Activated CD4-positive, alpha-beta T cell treated with anti-CD3 and anti-CD28 coated beads for 36 hours (primary cell): ENCODE measurements at regions of chr5 and their contacts with region 1.

Region 1: DNA sequence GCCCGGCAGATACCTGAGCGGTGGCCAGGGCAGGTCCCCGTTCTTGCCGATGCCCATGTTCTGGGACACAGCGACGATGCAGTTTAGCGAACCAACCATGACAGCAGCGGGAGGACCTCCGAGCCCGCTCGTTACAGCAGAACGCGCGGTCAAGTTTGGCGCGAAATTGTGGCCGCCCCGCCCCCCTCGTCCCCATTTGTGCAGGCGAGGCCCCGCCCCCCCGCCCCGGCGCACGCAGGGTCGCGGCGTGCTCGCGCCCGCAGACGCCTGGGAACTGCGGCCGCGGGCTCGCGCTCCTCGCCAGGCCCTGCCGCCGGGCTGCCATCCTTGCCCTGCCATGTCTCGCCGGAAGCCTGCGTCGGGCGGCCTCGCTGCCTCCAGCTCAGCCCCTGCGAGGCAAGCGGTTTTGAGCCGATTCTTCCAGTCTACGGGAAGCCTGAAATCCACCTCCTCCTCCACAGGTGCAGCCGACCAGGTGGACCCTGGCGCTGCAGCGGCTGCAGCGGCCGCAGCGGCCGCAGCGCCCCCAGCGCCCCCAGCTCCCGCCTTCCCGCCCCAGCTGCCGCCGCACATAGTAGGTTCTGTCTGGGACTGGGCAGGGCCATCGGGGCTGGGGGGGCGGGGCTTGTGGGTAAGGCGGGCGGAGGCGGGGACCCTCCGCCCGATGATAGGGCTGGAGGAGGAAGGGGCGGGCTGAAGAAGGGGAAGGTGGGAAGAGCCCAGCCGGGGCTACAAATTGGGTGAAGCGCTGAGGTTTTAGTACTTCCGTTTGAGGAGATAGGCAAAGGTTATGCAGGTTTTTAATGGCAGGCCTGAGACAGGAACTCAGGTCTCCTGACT is at the starts of genes DHFR and MSH3:
- DNase-seq: peak; percentile 95
- ATAC-seq: peak; percentile 69
- H3K4me3 Mint-ChIP-seq: peak within 1 kb of the TSS; percentile 94
- H3K27ac Mint-ChIP-seq: peak within 1 kb of the TSS; percentile 99
- H3K4me1 Mint-ChIP-seq: peaks cover 21% of the 10 kb centered on the region
- H3K27me3 Mint-ChIP-seq: no peaks in the 10 kb centered on the region
- total RNA-seq, gene DHFR: 105 to 107 TPM
- total RNA-seq, gene MSH3: 25.6 to 27.1 TPM

Region 2: GRCh38 chr5:79612667-79613198 is 1041.9 kb before region 1 on chr5:
- CTCF ChIA-PET with region 1: no interaction called
- POLR2A ChIA-PET with region 1: no interaction called
- intact Hi-C with region 1: loop called in 1 of 2 experiments (anchors 10 kb)
- DNase-seq: no peak
- ATAC-seq: no peak
- H3K4me3 Mint-ChIP-seq: peak overlapping the region; percentile 96
- H3K27ac Mint-ChIP-seq: peak overlapping the region; percentile 97
- H3K4me1 Mint-ChIP-seq: peaks cover 35% of the 10 kb centered on the region
- H3K27me3 Mint-ChIP-seq: no peaks in the 10 kb centered on the region

Region 3: GRCh38 chr5:80487829-80488721 is 166.5 kb before region 1 on chr5 and contains the start of gene FAM151B:
- CTCF ChIA-PET with region 1: no interaction called
- POLR2A ChIA-PET with region 1: no interaction called
- intact Hi-C with region 1: loop called (anchors 1 to 5 kb)
- DNase-seq: peak; percentile 88
- ATAC-seq: peak; percentile 96
- H3K4me3 Mint-ChIP-seq: peak within 1 kb of the TSS; percentile 78
- H3K27ac Mint-ChIP-seq: peak within 1 kb of the TSS; percentile 55
- H3K4me1 Mint-ChIP-seq: peaks cover 19% of the 10 kb centered on the region
- H3K27me3 Mint-ChIP-seq: peaks cover 6% of the 10 kb centered on the region
- total RNA-seq, gene FAM151B: 0.63 to 0.75 TPM

Region 4: DNA sequence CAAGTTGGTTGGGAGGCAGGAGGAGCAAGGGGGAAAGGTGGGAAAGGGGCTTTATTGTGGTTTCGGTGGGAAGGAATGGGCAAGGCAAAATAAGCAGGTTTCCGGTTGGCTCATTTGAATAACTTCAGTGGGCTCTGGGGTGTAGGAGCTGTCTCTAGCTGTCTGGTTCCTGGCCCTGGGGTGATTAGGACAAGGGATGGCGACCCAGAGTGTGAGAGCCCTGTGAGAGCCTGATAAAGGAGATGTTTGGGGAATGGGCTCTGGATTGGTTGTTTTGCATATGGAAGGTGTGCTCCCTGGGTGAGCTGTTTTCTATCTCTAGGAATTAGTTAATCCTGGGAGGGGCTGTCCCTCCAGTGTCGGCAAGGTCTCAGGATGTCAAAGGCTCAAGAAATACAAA is 100.0 kb before region 1 on chr5:
- CTCF ChIA-PET with region 1: no interaction called
- POLR2A ChIA-PET with region 1: no interaction called
- intact Hi-C with region 1: no loop called
- DNase-seq: no peak
- ATAC-seq: no peak
- H3K4me3 Mint-ChIP-seq: no peak overlapping the region
- H3K27ac Mint-ChIP-seq: no peak overlapping the region
- H3K4me1 Mint-ChIP-seq: no peaks in the 10 kb centered on the region
- H3K27me3 Mint-ChIP-seq: peaks cover 26% of the 10 kb centered on the region

Region 5: DNA sequence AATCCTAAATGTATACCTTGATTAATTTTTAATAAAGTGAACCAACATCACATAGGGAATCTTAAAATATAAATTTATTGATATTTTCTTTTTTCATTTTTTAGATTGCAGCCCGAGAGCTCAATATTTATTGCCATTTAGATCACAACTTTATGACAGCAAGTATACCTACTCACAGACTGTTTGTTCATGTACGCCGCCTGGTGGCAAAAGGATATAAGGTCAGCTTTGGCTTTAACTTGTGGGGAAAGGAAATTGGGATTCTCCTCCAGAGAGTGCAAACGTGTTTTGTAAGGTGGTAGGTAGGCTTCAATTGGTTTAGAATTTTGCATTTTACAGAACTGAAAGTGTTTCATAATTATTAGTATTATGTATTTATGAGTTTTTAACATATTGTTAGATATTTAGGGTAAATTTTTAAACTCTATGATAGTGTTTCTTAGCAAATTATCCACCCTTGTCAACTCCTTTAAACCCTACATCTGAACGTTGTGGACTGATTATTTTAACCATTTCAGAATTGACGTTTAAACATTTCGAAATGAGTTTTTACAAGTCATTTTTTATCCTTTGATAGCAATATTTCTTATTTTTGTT is 17.6 kb after region 1 on chr5:
- CTCF ChIA-PET with region 1: interaction called, 10 read pairs
- POLR2A ChIA-PET with region 1: no interaction called
- intact Hi-C with region 1: no loop called
- DNase-seq: peak; percentile 84
- ATAC-seq: peak; percentile 81
- H3K4me3 Mint-ChIP-seq: no peak overlapping the region
- H3K27ac Mint-ChIP-seq: no peak overlapping the region
- H3K4me1 Mint-ChIP-seq: no peaks in the 10 kb centered on the region
- H3K27me3 Mint-ChIP-seq: no peaks in the 10 kb centered on the region

Region 6: DNA sequence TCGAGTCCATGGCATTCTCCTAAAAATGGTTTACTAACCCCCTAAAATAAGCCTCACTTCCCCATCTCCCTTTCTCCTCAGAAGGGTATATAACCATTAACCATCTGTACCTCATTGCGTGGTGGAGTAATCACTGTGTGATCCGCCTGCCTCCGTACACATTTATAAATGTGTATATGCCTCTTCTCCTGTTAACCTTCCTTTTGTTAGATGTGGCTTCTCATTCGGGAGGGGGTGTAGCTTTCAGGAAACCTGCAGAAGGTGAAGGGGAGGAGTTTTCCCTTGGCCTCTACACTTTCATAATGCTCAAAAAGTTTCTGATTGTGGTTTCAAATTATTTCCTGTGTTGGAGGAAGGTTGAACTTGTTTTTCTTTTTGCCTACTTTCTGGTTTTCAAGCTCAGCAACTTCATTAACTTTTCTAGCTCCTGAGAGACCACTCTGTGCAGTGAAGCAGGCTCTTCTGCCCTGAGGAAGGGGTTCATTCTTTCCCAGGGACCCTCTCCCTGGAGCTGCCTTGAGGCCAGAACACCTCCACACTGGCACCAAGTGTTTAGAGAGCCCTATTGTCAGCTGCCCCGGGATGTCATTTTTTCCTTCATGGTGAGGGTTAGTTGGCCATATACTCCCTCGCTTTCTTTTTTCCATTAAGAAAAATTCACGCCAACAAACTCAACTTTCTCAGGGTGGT is 352.5 kb after region 1 on chr5:
- CTCF ChIA-PET with region 1: no interaction called
- POLR2A ChIA-PET with region 1: no interaction called
- intact Hi-C with region 1: loop called in 1 of 2 experiments (anchors 5 kb)
- DNase-seq: peak; percentile 71
- ATAC-seq: peak; percentile 83
- H3K4me3 Mint-ChIP-seq: peak overlapping the region; percentile 77
- H3K27ac Mint-ChIP-seq: peak overlapping the region; percentile 96
- H3K4me1 Mint-ChIP-seq: peaks cover 82% of the 10 kb centered on the region
- H3K27me3 Mint-ChIP-seq: no peaks in the 10 kb centered on the region

Region 7: DNA sequence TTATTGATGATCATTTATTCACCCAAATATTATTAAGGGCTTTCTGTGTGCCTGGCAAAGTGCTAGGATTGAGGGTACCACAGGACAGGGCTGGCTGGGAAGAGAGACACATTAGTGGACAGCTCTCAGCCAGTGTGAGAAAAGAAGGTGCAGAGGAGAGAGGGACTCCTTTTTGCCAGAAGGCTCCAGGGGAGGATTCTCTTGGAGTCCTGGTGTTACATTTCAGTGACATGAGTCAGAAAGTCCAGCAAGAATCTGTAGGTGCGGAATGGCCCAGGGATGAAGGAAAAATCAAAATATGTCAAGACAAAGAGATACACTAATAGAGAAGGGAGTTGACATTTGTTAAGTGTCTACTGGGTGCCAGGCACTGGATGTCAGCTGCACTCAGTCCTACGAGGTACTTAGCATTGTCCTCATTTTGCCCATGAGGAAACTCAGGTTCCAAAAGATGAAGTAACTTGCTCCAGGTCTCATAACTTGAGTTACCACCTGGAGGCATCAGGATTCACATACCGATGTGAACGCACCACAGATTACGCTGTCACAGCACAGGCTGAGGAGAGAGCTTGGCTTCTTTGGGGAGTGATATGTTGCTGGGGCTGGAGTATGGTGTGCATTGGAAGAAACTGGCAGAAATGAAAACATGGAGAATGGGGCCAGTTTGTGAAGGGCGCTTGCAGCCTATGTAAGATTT is 366.0 kb after region 1 on chr5:
- CTCF ChIA-PET with region 1: no interaction called
- POLR2A ChIA-PET with region 1: no interaction called
- intact Hi-C with region 1: loop called in 1 of 2 experiments (anchors 1 kb)
- DNase-seq: no peak
- ATAC-seq: no peak
- H3K4me3 Mint-ChIP-seq: no peak overlapping the region
- H3K27ac Mint-ChIP-seq: no peak overlapping the region
- H3K4me1 Mint-ChIP-seq: peaks cover 90% of the 10 kb centered on the region
- H3K27me3 Mint-ChIP-seq: no peaks in the 10 kb centered on the region

Region 8: GRCh38 chr5:81787474-81788242 is 1133.0 kb after region 1 on chr5:
- CTCF ChIA-PET with region 1: no interaction called
- POLR2A ChIA-PET with region 1: no interaction called
- intact Hi-C with region 1: no loop called
- DNase-seq: no peak
- ATAC-seq: no peak
- H3K4me3 Mint-ChIP-seq: no peak overlapping the region
- H3K27ac Mint-ChIP-seq: no peak overlapping the region
- H3K4me1 Mint-ChIP-seq: peaks cover 12% of the 10 kb centered on the region
- H3K27me3 Mint-ChIP-seq: no peaks in the 10 kb centered on the region

Region 9: GRCh38 chr5:82278095-82278918 is 1623.7 kb after region 1 on chr5 and contains the start of gene RPS23:
- CTCF ChIA-PET with region 1: no interaction called
- POLR2A ChIA-PET with region 1: no interaction called
- intact Hi-C with region 1: loop called in 1 of 2 experiments (anchors 10 kb)
- DNase-seq: peak; percentile 93
- ATAC-seq: peak; percentile 95
- H3K4me3 Mint-ChIP-seq: peak within 1 kb of the TSS; percentile 86
- H3K27ac Mint-ChIP-seq: peak within 1 kb of the TSS; percentile 99
- H3K4me1 Mint-ChIP-seq: peaks cover 46% of the 10 kb centered on the region
- H3K27me3 Mint-ChIP-seq: no peaks in the 10 kb centered on the region
- total RNA-seq, gene RPS23: 2,831 to 3,226 TPM